Heart right ventricle (tissue), 16 donors: ENCODE measurements at regions of chr16 and their contacts with region 1.

Region 1: GRCh38 chr16:74709441-74709877 is 8.8 kb upstream of the MLKL start:
- DNase-seq: peak; percentile 72 to 80
- ATAC-seq: peak; percentile 74 to 93 (median 88)
- H3K4me3 ChIP-seq: no peak overlapping the region
- H3K27ac ChIP-seq: no peak overlapping the region
- H3K4me1 ChIP-seq: no peaks in the 10 kb centered on the region
- H3K27me3 ChIP-seq: no peaks in the 10 kb centered on the region
- CTCF ChIP-seq: peak; percentile 87 to 100 (median 95)

Region 2: DNA sequence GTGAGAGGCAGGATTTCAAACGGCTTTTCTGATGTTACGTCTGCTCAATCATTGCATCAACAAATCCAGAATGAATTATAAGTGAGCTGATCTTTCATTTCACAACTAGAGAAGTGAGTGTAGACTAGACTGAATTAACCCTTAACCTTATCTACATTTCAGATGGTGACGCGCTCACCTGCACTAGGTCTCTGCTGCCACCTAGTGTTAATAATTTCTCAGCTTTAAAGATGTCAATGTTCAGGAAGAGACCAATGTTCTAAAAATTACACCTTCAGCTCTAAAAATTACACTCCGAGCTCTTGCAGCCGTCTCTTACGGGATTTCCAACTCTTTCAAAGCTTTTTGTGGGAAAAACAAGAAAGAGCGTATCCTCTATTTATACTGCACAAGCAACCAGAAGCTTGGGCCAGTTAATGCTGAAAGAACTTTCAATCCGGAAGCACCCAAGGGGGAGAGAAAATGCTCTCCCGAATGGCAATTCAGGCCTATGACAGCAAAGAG is 153.3 kb after region 1 on chr16:
- intact Hi-C with region 1: loop called (anchors 1 to 5 kb)
- DNase-seq: no peak
- ATAC-seq: peak in 2 of 8 donors; percentile 56 to 57
- H3K4me3 ChIP-seq: no peak overlapping the region
- H3K27ac ChIP-seq: no peak overlapping the region
- H3K4me1 ChIP-seq: peaks cover 0 to 8% (median 1%) of the 10 kb centered on the region in 9 donors
- H3K27me3 ChIP-seq: no peaks in the 10 kb centered on the region
- CTCF ChIP-seq: peak; percentile 65 to 93 (median 81)

Region 3: DNA sequence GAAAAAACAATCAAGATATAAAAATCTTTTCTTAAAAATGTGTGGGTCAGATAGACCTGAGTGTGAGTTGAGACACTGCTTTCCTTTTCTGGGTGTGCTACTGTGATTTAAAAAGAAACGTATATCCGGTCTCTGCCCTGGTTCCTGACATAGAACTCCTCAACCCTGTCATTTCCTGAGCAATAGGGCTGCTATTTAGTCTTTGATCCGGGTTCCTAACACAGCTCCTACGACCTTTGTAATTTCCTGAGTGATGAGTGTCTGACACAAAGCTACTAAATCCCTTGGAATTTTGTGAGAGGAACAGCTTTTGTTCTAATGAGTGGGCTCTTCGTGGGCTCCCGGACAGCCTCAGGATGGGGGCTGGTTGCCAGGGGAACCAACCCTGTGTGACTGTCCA is 159.0 kb after region 1 on chr16:
- intact Hi-C with region 1: loop called in 6 of 10 experiments (anchors 2 to 5 kb)
- DNase-seq: peak in 1 of 2 donors; percentile 16
- ATAC-seq: peak; percentile 72 to 95 (median 87)
- H3K4me3 ChIP-seq: no peak overlapping the region
- H3K27ac ChIP-seq: peak overlapping the region; percentile 22 to 82 (median 69)
- H3K4me1 ChIP-seq: peaks cover 0 to 16% (median 7%) of the 10 kb centered on the region in 9 donors
- H3K27me3 ChIP-seq: no peaks in the 10 kb centered on the region
- CTCF ChIP-seq: no peak

Region 4: GRCh38 chr16:75130150-75130771 is 420.8 kb after region 1 on chr16:
- intact Hi-C with region 1: loop called in 2 of 10 experiments (anchors 5 to 10 kb)
- DNase-seq: no peak
- ATAC-seq: peak in 1 of 8 donors; percentile 55
- H3K4me3 ChIP-seq: no peak overlapping the region
- H3K27ac ChIP-seq: no peak overlapping the region
- H3K4me1 ChIP-seq: no peaks in the 10 kb centered on the region
- H3K27me3 ChIP-seq: peaks cover 0 to 9% (median 0%) of the 10 kb centered on the region in 7 donors
- CTCF ChIP-seq: peak in 6 of 9 donors; percentile 18 to 49 (median 34)